Activated B cell treated with CpG ODN at 0.5 μM for 24 hours (primary cell): ENCODE measurements at regions of chr16 and their contacts with region 1.

Region 1: DNA sequence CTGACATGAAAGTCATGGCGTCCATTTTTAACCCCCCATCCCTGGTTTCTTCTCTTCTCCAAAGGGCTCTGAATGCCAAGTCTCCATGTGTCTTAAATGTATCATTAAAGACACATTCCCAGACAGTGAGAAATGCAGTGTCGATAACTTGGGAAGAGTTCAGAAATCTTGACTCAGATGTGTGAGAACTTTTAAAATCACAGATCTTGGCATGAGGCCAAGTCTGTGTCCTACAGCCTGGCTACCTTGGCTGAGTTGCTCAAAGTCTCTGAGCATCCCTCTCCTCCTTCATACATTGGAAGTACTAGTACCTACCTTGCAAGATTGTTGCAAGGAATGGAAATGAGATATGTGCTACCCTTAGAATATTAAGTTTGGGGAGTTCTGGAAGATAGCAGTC is 1046.5 kb upstream of the RBFOX1 start:
- DNase-seq: no peak
- ATAC-seq: no peak
- H3K4me3 Mint-ChIP-seq: no peak overlapping the region
- H3K27ac Mint-ChIP-seq: no peak overlapping the region
- H3K4me1 Mint-ChIP-seq: no peaks in the 10 kb centered on the region
- H3K27me3 Mint-ChIP-seq: no peaks in the 10 kb centered on the region
- CTCF ChIP-seq: no peak

Region 2: DNA sequence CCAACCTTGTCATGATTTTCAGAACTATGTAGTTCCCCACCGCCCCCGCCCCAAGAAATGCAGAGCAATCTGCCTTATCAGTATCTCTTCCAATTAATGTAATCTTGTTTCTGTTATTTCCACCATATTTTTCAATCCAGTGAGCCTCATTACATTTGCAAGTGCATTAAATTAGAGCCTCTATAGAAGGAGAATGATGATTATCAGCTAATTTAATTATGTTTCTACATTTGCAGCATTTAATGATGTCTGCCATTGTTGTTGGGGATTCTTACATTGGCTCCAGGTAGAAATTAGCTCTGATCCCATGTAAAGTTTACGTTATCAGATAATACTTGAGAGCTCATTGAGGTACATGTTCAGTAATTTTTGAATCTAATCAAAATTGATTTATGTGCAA is 339.4 kb after region 1 on chr16:
- CTCF ChIA-PET with region 1: no interaction called
- POLR2A ChIA-PET with region 1: interaction called, 14 read pairs
- intact Hi-C with region 1: no loop called
- DNase-seq: no peak
- ATAC-seq: no peak
- H3K4me3 Mint-ChIP-seq: no peak overlapping the region
- H3K27ac Mint-ChIP-seq: no peak overlapping the region
- H3K4me1 Mint-ChIP-seq: no peaks in the 10 kb centered on the region
- H3K27me3 Mint-ChIP-seq: no peaks in the 10 kb centered on the region
- CTCF ChIP-seq: no peak